CD4-positive, alpha-beta T cell (primary cell): ENCODE measurements at regions of chr1 and their contacts with region 1.

Region 1: GRCh38 chr1:212455803-212456528 is 23.2 kb downstream of the NENF start:
- DNase-seq: peak; percentile 64 to 90 (median 80)
- ATAC-seq: peak; percentile 74
- H3K4me3 ChIP-seq: no peak overlapping the region
- H3K4me3 Mint-ChIP-seq: no peak overlapping the region
- H3K27ac ChIP-seq: no peak overlapping the region
- H3K27ac Mint-ChIP-seq: no peak overlapping the region
- H3K4me1 ChIP-seq: peaks cover 5% of the 10 kb centered on the region
- H3K4me1 Mint-ChIP-seq: peaks cover 7% of the 10 kb centered on the region
- H3K27me3 ChIP-seq: no peaks in the 10 kb centered on the region
- H3K27me3 Mint-ChIP-seq: no peaks in the 10 kb centered on the region
- CTCF ChIP-seq: peak; percentile 99

Region 2: DNA sequence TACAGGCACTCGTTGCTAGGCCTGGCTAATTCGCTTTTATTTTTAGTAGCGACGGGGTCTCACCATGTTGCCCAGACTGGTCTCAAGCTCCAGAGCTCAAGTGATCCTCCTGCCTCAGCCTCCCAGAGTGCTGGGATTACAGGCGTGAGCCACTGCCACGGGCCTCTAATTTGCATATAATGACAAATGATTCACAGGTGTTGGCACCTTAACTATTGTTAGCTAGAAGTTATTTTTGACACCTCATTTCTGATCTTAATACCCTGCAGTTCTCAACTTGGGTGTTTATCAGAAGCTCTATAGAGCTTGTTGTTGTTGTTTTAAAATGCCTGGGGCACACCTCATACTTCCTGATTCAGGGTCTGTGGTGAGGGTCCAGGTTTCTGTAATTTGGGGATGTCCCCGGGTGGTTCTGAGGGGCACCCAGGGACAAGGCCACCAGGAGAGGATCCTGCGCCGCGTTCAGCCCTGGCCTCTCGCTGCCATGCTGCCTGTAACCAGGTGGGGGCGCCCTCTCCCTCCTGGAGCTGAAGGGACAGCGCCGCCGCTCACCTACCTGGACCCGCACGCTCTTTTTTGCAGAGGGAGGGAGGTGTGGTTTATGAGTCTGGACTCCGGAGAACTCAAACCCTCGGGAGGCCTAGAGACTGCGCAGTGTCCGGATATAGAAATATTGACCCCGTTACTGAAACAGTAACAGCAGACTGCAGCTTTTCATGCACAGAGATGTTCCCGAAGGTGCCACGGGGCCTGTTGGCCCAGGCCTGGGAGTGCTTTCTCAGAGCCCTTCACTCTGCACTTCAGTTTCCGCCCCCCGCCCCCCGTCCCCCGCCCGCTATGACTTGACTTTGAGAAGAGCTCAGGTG is 757.6 kb before region 1 on chr1:
- CTCF ChIA-PET with region 1: interaction called, 15 read pairs
- POLR2A ChIA-PET with region 1: no interaction called
- intact Hi-C with region 1: loop called in 1 of 2 experiments (anchors 1 kb)
- DNase-seq: peak; percentile 64 to 85 (median 79)
- ATAC-seq: peak; percentile 98
- H3K4me3 ChIP-seq: peak overlapping the region; percentile 35
- H3K4me3 Mint-ChIP-seq: no peak overlapping the region
- H3K27ac ChIP-seq: no peak overlapping the region
- H3K27ac Mint-ChIP-seq: no peak overlapping the region
- H3K4me1 ChIP-seq: peaks cover 29% of the 10 kb centered on the region
- H3K4me1 Mint-ChIP-seq: peaks cover 16% of the 10 kb centered on the region
- H3K27me3 ChIP-seq: no peaks in the 10 kb centered on the region
- H3K27me3 Mint-ChIP-seq: no peaks in the 10 kb centered on the region
- CTCF ChIP-seq: peak; percentile 78

Region 3: GRCh38 chr1:212062832-212063438 is 393.0 kb before region 1 on chr1:
- CTCF ChIA-PET with region 1: interaction called, 17 read pairs
- POLR2A ChIA-PET with region 1: no interaction called
- intact Hi-C with region 1: loop called in 1 of 2 experiments (anchors 2 kb)
- DNase-seq: peak in 3 of 14 experiments; percentile 47 to 57 (median 55)
- ATAC-seq: peak; percentile 69
- H3K4me3 ChIP-seq: no peak overlapping the region
- H3K4me3 Mint-ChIP-seq: no peak overlapping the region
- H3K27ac ChIP-seq: no peak overlapping the region
- H3K27ac Mint-ChIP-seq: no peak overlapping the region
- H3K4me1 ChIP-seq: no peaks in the 10 kb centered on the region
- H3K4me1 Mint-ChIP-seq: no peaks in the 10 kb centered on the region
- H3K27me3 ChIP-seq: no peaks in the 10 kb centered on the region
- H3K27me3 Mint-ChIP-seq: no peaks in the 10 kb centered on the region
- CTCF ChIP-seq: peak; percentile 80

Region 4: DNA sequence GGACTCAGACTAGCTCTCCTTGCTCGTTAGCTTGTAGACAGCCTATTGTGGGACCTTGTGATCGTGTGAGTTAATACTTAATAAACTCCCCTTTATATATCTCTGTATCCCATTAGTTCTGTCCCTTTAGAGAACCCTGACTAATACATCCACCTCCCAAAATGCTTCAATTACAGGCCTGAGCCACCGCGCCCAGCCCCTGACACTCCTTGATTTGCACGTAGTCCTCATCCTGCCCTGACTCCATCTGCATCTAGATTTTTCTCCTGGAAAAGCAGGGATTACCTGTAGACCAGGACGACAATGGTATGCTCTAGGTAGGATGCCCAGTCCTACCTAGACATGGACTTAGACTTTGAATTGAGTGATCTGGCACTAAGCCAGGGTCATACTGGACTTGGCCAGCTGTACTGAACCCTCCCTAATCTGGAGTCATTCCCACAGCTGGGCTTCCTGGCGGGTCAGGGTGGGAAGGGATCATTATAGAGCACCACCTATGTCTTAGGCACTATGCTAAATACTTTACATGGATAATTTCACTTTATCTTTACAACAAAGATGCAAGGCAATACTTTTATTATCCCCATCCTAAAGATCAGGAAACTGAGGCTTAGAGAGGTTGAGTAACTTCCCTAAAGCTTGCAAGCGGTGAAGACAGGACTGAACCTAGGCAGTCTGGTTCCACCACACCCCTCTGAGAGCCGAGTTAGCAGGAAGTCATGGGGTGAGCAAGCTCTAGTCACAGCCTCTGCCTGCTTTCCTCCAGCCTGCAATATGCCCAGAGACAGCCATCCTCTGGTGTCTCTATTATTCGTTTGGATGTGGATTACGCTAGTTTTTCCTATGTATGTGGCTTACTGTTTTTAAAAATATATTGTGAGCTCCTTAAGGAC is 331.0 kb before region 1 on chr1:
- CTCF ChIA-PET with region 1: no interaction called
- POLR2A ChIA-PET with region 1: no interaction called
- intact Hi-C with region 1: no loop called
- DNase-seq: peak in 4 of 14 experiments; percentile 11 to 44 (median 18)
- ATAC-seq: no peak
- H3K4me3 ChIP-seq: no peak overlapping the region
- H3K4me3 Mint-ChIP-seq: no peak overlapping the region
- H3K27ac ChIP-seq: no peak overlapping the region
- H3K27ac Mint-ChIP-seq: no peak overlapping the region
- H3K4me1 ChIP-seq: peaks cover 9% of the 10 kb centered on the region
- H3K4me1 Mint-ChIP-seq: peaks cover 5% of the 10 kb centered on the region
- H3K27me3 ChIP-seq: no peaks in the 10 kb centered on the region
- H3K27me3 Mint-ChIP-seq: no peaks in the 10 kb centered on the region
- CTCF ChIP-seq: no peak

Region 5: DNA sequence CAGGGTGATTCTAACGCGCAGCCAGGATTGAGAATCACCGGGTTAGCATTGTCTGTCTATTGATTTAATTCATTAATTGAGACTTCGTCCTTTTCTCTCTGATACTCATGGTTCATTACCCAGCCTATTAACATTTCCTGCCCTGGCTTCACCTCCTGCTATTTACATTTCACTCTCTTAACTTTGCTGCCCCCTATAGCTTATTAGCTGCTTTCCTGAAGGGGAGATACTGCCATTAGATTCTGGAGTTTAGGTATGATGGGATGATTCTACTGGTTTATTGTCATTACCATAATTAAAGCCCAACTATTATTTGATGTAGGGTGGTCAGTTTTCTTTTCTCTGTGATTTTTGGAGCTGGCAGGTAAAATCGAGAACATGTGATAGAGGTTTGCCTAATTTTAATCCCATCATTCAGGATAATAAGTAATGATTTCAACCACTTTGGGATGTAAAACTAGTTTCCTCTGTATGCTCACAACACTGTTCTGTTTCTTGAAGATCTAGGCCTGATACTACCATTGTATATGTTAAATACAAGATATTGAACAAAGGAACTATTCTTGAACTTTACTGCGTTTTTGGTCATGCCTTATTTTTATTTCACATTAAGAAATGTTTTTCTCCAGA is 164.3 kb before region 1 on chr1:
- CTCF ChIA-PET with region 1: interaction called, 4 read pairs
- POLR2A ChIA-PET with region 1: no interaction called
- intact Hi-C with region 1: loop called in 1 of 2 experiments (anchors 5 kb)
- DNase-seq: peak in 3 of 14 experiments; percentile 74 to 80 (median 79)
- ATAC-seq: peak; percentile 73
- H3K4me3 ChIP-seq: no peak overlapping the region
- H3K4me3 Mint-ChIP-seq: peak overlapping the region; percentile 66
- H3K27ac ChIP-seq: no peak overlapping the region
- H3K27ac Mint-ChIP-seq: peak overlapping the region; percentile 24
- H3K4me1 ChIP-seq: peaks cover 32% of the 10 kb centered on the region
- H3K4me1 Mint-ChIP-seq: peaks cover 84% of the 10 kb centered on the region
- H3K27me3 ChIP-seq: no peaks in the 10 kb centered on the region
- H3K27me3 Mint-ChIP-seq: no peaks in the 10 kb centered on the region
- CTCF ChIP-seq: peak; percentile 75

Region 6: DNA sequence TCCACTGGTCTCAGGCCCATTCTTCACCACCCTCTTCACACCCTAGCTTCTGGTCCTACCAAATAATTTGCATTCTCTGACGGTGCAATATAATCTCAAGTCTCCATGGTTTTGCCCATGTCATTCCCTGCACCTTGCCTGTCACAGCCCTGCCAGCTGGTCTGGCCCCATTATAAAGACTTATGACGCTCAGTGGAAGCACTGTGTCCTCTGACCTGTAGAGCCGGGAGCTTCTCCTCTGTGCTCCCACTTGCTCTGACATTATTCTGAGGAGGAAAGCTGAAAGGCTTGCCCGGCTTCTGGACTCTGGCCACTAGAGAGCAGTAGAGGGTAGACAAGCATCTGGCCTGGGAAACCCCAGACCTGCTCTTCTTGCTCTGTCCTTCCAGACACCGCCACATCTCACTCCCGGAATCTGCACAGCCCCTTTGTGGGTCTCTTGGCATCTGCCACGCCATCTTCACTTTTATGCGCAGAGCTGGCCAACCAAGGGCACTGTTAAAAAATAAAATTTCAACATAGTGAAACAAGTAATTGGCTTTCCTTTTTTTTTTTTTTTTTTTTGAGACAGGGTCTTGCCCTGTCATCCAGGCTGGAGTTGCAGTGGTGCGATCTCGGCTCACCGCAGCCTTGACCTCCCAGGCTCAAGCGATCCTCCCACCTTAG is 21.2 kb after region 1 on chr1:
- CTCF ChIA-PET with region 1: interaction called, 15 read pairs
- POLR2A ChIA-PET with region 1: no interaction called
- intact Hi-C with region 1: no loop called
- DNase-seq: peak; percentile 57 to 88 (median 63)
- ATAC-seq: peak; percentile 99
- H3K4me3 ChIP-seq: no peak overlapping the region
- H3K4me3 Mint-ChIP-seq: peak overlapping the region; percentile 51
- H3K27ac ChIP-seq: no peak overlapping the region
- H3K27ac Mint-ChIP-seq: no peak overlapping the region
- H3K4me1 ChIP-seq: peaks cover 13% of the 10 kb centered on the region
- H3K4me1 Mint-ChIP-seq: peaks cover 6% of the 10 kb centered on the region
- H3K27me3 ChIP-seq: no peaks in the 10 kb centered on the region
- H3K27me3 Mint-ChIP-seq: peaks cover 12% of the 10 kb centered on the region
- CTCF ChIP-seq: peak; percentile 86

Region 7: DNA sequence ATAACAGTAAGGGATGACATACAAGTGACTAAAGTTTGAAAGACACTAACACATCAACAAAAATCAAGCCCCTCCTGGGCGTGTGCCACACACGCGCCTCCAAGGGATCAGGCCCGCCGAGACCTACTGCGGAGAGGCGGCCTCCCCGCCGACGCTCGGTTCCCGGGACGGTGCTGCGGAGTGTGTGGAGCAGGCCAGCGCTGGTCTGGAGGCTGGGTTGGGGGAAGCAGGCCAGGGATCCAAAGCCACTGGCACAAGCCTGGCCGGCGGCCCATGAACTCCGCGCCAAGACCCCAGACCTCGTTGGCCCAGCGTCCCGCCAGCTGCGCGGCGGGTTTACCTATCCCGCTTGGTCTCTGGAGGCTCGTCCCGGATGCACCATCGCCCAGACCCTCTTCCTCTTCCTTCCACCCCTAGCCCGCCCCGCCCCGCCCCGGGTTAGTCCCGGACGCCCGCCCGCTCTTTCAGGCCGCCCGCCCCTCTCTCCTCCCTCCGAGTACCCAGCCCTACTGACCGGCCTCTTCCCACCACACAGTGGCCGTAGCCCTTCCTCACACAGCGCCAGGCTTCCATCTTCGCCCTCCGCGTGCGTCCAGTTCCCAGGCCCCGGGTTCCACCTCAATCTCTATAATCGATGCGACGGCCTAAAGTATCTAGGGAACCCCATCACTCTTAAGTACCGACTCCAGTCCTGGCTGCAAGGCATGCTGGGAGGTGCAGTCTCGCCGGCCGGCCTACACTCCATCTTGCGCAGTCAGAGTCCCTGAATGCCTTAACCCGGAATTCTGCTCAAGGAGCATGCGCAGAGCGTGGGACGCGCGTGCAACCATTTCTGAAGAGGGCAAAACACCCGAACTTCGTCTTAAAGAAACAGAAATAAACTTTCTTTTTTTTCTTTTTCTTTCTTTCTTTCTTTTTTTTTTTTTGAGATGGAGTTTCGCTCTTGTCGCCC is 559.4 kb after region 1 on chr1 and contains the start of gene ANGEL2:
- CTCF ChIA-PET with region 1: no interaction called
- POLR2A ChIA-PET with region 1: no interaction called
- intact Hi-C with region 1: no loop called
- DNase-seq: peak; percentile 88 to 99 (median 94)
- ATAC-seq: peak; percentile 98
- H3K4me3 ChIP-seq: peak within 1 kb of the TSS; percentile 72
- H3K4me3 Mint-ChIP-seq: peak within 1 kb of the TSS; percentile 99
- H3K27ac ChIP-seq: peak within 1 kb of the TSS; percentile 75 to 86
- H3K27ac Mint-ChIP-seq: peak within 1 kb of the TSS; percentile 96
- H3K4me1 ChIP-seq: peaks cover 12% of the 10 kb centered on the region
- H3K4me1 Mint-ChIP-seq: peaks cover 44% of the 10 kb centered on the region
- H3K27me3 ChIP-seq: no peaks in the 10 kb centered on the region
- H3K27me3 Mint-ChIP-seq: no peaks in the 10 kb centered on the region
- CTCF ChIP-seq: no peak
- total RNA-seq, gene ANGEL2: 53.0 to 56.2 TPM